Activated T-helper 1 cell treated with anti-CD3 and anti-CD28 coated beads, Interleukin-12 subunit alpha, Interleukin-12 subunit beta, Interleukin-2, Interleukin-4 antibody, amounts not matched to agents 30 ng/mL and 10 ng/mL and 1 ng/mL, durations not matched to agents 14 hours and 24 hours and 36 hours (primary cell): ENCODE measurements at regions of chr5 and their contacts with region 1.

Region 1: DNA sequence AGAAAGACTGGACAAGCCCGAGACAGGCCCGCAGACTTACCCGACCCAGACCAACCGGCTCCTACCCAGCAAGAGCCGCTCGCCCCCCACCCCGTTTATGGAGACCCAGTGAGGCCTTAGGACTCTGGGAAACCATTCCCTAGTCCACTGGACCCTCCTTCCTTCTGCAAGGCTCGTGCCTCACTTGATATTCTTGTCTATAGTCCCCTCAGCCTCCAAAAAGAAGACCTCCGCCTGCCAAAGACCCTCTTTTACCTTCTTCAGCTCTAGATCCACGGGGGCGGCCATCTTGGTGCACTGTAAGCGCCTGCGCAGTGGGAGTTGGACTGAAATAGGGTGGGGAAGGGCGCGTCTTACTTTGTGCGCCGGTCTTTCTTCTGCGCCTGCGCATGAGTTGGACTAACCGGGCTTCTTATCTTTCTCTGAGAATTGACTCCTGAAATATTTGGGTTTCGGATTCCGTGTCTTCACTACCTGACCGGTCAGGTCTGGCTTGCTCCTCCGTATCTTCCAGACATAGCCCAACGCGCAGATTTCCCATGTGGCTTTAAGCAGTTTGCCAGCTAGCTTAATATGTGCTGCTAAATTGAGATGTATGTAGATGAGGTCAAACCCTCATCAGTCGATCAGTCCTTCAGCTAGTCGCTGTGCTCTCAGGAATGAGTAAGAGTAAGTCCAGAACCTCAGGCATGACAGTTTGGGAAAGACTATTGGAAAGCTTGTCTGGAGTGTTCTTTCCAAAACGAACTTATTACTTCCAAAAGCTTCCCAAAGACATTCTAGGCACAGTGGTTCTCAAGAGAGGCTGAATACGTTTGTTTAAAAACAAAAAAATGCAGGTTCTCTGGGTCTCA is at the start of gene PFDN1:
- DNase-seq: peak; percentile 90
- H3K4me3 Mint-ChIP-seq: peak within 1 kb of the TSS; percentile 93
- H3K27ac Mint-ChIP-seq: peak within 1 kb of the TSS; percentile 93
- H3K4me1 Mint-ChIP-seq: peaks cover 38% of the 10 kb centered on the region
- H3K27me3 Mint-ChIP-seq: no peaks in the 10 kb centered on the region
- total RNA-seq, gene PFDN1: 59.5 and 60.6 TPM in 2 replicates

Region 2: GRCh38 chr5:140126315-140127012 is 176.5 kb before region 1 on chr5:
- intact Hi-C with region 1: no loop called
- DNase-seq: no peak
- H3K4me3 Mint-ChIP-seq: no peak overlapping the region
- H3K27ac Mint-ChIP-seq: no peak overlapping the region
- H3K4me1 Mint-ChIP-seq: peaks cover 17% of the 10 kb centered on the region
- H3K27me3 Mint-ChIP-seq: peaks cover 13% of the 10 kb centered on the region

Region 3: GRCh38 chr5:140244525-140245025 is 58.4 kb before region 1 on chr5:
- intact Hi-C with region 1: loop called (anchors 1 kb)
- DNase-seq: peak; percentile 72
- H3K4me3 Mint-ChIP-seq: peak overlapping the region; percentile 38
- H3K27ac Mint-ChIP-seq: no peak overlapping the region
- H3K4me1 Mint-ChIP-seq: peaks cover 42% of the 10 kb centered on the region
- H3K27me3 Mint-ChIP-seq: no peaks in the 10 kb centered on the region

Region 4: DNA sequence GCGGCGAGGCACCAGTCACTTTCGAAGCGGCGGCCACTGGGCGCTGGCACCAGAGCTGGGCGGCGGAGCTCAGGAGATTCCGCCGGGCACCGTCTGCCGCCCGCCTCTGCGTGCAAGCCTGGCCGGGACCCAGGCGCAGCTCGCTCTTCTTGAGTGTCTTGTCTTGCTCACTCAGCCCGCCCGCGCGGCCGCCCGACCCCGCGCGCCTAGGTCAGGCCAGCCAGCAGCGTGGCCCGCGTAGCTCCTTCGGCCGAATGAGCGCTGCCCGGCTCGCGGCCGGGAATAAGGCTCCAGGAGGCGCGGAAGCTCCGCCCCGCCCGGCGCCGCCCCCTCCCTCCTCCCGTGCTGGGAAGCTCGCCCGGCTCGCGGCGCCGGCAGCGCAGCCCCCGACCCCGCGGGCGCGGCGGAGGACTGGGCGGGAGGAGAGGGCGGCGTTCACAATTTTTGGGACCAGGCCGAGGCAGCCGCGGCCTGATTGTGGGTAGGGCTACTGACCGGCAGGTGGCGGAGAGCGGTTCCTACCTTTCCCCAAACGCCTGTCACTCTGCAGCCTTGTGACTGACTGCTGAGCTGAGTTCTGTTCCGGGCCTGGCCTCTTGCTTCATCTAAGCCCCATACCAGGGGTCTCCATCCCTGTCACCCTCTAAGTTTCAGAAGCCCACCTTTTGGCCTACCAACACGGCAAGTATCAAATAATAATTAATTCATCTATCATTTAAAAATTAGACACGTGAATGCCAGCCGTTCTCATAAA is 43.5 kb after region 1 on chr5 and contains the start of gene HBEGF:
- intact Hi-C with region 1: loop called (anchors 1 kb)
- DNase-seq: peak; percentile 55
- H3K4me3 Mint-ChIP-seq: peak within 1 kb of the TSS; percentile 87
- H3K27ac Mint-ChIP-seq: peak within 1 kb of the TSS; percentile 99
- H3K4me1 Mint-ChIP-seq: peaks cover 77% of the 10 kb centered on the region
- H3K27me3 Mint-ChIP-seq: peaks cover 1% of the 10 kb centered on the region
- total RNA-seq, gene HBEGF: 28.5 and 28.9 TPM in 2 replicates

Region 5: GRCh38 chr5:140357726-140358093 is 54.7 kb after region 1 on chr5:
- intact Hi-C with region 1: loop called (anchors 1 kb)
- DNase-seq: peak; percentile 71
- H3K4me3 Mint-ChIP-seq: peak overlapping the region; percentile 74
- H3K27ac Mint-ChIP-seq: no peak overlapping the region
- H3K4me1 Mint-ChIP-seq: peaks cover 17% of the 10 kb centered on the region
- H3K27me3 Mint-ChIP-seq: peaks cover 4% of the 10 kb centered on the region

Region 6: GRCh38 chr5:140564196-140565023 is 261.4 kb after region 1 on chr5 and contains the starts of genes APBB3 and SLC35A4:
- intact Hi-C with region 1: loop called (anchors 2 kb)
- DNase-seq: peak; percentile 98
- H3K4me3 Mint-ChIP-seq: peak within 1 kb of the TSS; percentile 95
- H3K27ac Mint-ChIP-seq: peak within 1 kb of the TSS; percentile 96
- H3K4me1 Mint-ChIP-seq: peaks cover 54% of the 10 kb centered on the region
- H3K27me3 Mint-ChIP-seq: no peaks in the 10 kb centered on the region
- total RNA-seq, gene APBB3: 17.2 and 21.2 TPM in 2 replicates
- total RNA-seq, gene SLC35A4: 94.3 and 107 TPM in 2 replicates

Region 7: DNA sequence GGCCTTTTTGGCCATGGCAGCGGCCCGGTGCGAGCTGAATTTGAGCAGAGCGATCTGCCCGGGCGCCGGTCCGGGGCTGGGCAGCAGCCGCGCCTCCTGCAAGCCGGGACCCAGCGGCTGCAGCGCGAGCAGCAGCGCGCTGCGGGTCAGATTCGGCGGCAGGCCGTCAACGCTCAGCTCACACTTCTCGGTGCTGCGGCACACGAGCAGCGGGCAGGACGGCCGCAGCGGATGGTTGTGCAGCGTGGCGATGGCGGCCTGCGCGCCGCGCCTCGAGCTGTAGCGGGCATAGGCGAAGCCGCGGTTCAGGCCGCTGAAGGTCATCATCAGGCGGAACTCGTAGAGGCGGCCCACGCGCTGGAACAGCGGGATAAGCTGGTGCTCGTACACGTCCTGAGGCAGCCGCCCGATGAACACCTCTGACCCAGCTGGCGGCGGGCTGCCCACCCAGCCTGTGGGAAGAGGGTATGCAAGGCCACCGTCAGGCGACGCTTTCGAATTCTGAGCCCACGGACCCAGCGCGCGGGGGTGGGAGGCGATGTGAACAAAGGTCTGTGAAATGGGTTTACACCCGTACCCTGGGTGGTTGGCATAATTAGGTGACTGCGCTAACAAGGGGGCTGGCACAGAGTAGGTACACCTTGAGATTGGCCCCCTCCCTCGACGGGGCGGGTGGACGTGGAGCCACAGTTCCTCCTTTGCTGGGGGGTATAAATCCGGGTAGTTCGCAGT is 369.6 kb after region 1 on chr5:
- intact Hi-C with region 1: no loop called
- DNase-seq: no peak
- H3K4me3 Mint-ChIP-seq: no peak overlapping the region
- H3K27ac Mint-ChIP-seq: no peak overlapping the region
- H3K4me1 Mint-ChIP-seq: peaks cover 12% of the 10 kb centered on the region
- H3K27me3 Mint-ChIP-seq: no peaks in the 10 kb centered on the region

Region 8: GRCh38 chr5:140690941-140691924 is 388.2 kb after region 1 on chr5 and contains the starts of genes HARS1 and HARS2:
- intact Hi-C with region 1: loop called (anchors 2 kb)
- DNase-seq: peak; percentile 81
- H3K4me3 Mint-ChIP-seq: peak within 1 kb of the TSS; percentile 100
- H3K27ac Mint-ChIP-seq: peak within 1 kb of the TSS; percentile 95
- H3K4me1 Mint-ChIP-seq: peaks cover 50% of the 10 kb centered on the region
- H3K27me3 Mint-ChIP-seq: no peaks in the 10 kb centered on the region
- total RNA-seq, gene HARS1: 112 and 114 TPM in 2 replicates
- total RNA-seq, gene HARS2: 31.2 and 32.7 TPM in 2 replicates